ENCODE measurements at regions of chr10 and their contacts with region 1.

Region 1: GRCh38 chr10:132571650-132572535 is 34.3 kb downstream of the INPP5A start:
- DNase-seq: peak; percentile 92
- ATAC-seq: peak; percentile 84
- H3K4me3 Mint-ChIP-seq: no peak overlapping the region
- H3K27ac Mint-ChIP-seq: peak overlapping the region; percentile 60
- H3K4me1 Mint-ChIP-seq: no peaks in the 10 kb centered on the region
- H3K27me3 Mint-ChIP-seq: peaks cover 15% of the 10 kb centered on the region

Region 2: GRCh38 chr10:132551093-132551807 is 20.6 kb before region 1 on chr10:
- CTCF ChIA-PET with region 1: interaction called, 10 read pairs
- DNase-seq: peak; percentile 67
- ATAC-seq: peak; percentile 83
- H3K4me3 Mint-ChIP-seq: peak overlapping the region; percentile 52
- H3K27ac Mint-ChIP-seq: peak overlapping the region; percentile 82
- H3K4me1 Mint-ChIP-seq: peaks cover 21% of the 10 kb centered on the region
- H3K27me3 Mint-ChIP-seq: no peaks in the 10 kb centered on the region

Measured in activated CD8-positive, alpha-beta memory T cell treated with anti-CD3 and anti-CD28 coated beads, Interleukin-2, amount 10 ng/mL, durations not matched to agents 7 days and 5 days (primary cell).